ENCODE measurements at regions of chr13 and their contacts with region 1.

Region 1: GRCh38 chr13:99501184-99501847 is at the start of gene TM9SF2:
- DNase-seq: peak; percentile 94 to 98 (median 96)
- ATAC-seq: peak; percentile 70
- H3K4me3 ChIP-seq: peak within 1 kb of the TSS; percentile 93
- H3K4me3 Mint-ChIP-seq: peak within 1 kb of the TSS; percentile 94 to 100 (median 97)
- H3K27ac ChIP-seq: peak within 1 kb of the TSS; percentile 94
- H3K27ac Mint-ChIP-seq: peak within 1 kb of the TSS; percentile 96 to 99 (median 98)
- H3K4me1 ChIP-seq: peaks cover 47 to 65% of the 10 kb centered on the region in 2 donors
- H3K4me1 Mint-ChIP-seq: peaks cover 57 to 93% (median 85%) of the 10 kb centered on the region in 7 donors
- H3K27me3 ChIP-seq: no peaks in the 10 kb centered on the region
- H3K27me3 Mint-ChIP-seq: peaks cover 0 to 4% (median 0%) of the 10 kb centered on the region in 5 donors
- total RNA-seq, gene TM9SF2: 38.0 to 76.3 (median 53.1) TPM

Region 2: DNA sequence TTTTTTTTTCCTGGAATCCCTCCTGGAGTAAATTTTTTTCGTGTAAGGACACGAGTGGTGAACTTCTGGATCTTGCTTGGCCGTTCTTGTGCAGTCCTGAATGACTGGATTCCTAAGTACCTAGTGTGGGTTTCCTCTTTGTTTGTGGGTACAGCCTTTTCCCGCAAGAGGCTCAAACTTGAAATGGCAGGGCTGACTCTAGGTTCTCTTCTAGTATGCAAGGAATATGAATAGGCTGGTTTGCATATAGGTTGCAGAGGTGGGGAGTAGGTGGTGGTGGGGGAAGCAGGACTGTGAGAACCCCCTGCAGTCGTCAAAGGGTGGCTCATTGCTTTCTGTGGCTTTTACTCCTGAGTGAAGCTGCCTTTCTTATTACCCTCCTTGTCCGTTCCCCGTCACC is 287.1 kb before region 1 on chr13:
- CTCF ChIA-PET with region 1: interaction called, 3 read pairs
- POLR2A ChIA-PET with region 1: interaction called, 5 read pairs
- intact Hi-C with region 1: loop called (anchors 5 kb)
- DNase-seq: peak in 4 of 9 donors; percentile 34 to 53 (median 46)
- ATAC-seq: no peak
- H3K4me3 ChIP-seq: peak overlapping the region; percentile 53
- H3K4me3 Mint-ChIP-seq: peak overlapping the region; percentile 69 to 95 (median 92)
- H3K27ac ChIP-seq: peak overlapping the region; percentile 85
- H3K27ac Mint-ChIP-seq: peak overlapping the region; percentile 94 to 100 (median 99)
- H3K4me1 ChIP-seq: peaks cover 46 to 67% of the 10 kb centered on the region in 2 donors
- H3K4me1 Mint-ChIP-seq: peaks cover 49 to 93% (median 79%) of the 10 kb centered on the region in 7 donors
- H3K27me3 ChIP-seq: no peaks in the 10 kb centered on the region
- H3K27me3 Mint-ChIP-seq: no peaks in the 10 kb centered on the region

Region 3: DNA sequence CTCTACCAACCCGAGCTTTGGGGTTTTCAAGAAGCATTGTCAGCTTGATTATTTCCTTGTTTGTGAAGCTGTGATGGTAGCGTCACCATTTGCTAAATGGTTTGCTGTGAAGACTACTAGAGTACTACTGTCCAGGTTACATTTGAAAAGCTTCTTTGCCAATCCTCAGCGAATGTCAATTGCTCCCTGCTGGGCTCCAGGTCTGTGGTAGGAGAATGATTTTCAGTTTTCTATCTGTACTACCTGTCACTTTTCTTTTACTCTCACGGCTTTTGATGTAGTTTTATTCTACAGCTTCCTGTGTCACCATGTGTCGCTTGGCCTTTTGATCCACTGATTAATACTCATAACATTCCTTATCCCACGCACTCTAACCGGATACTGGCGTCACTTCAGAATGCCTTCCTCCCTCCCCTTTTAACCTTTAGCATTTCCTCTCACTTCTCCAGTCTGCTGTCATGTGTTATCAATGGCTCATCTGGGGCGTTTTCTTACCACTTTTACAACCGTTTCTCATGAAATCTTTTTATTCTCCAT is 186.6 kb before region 1 on chr13:
- CTCF ChIA-PET with region 1: no interaction called
- POLR2A ChIA-PET with region 1: no interaction called
- intact Hi-C with region 1: loop called (anchors 2 to 5 kb)
- DNase-seq: peak in 8 of 9 donors; percentile 57 to 89 (median 87)
- ATAC-seq: peak; percentile 80
- H3K4me3 ChIP-seq: peak overlapping the region; percentile 47
- H3K4me3 Mint-ChIP-seq: peak overlapping the region; percentile 46 to 91 (median 78)
- H3K27ac ChIP-seq: peak overlapping the region; percentile 90
- H3K27ac Mint-ChIP-seq: peak overlapping the region; percentile 87 to 99 (median 93)
- H3K4me1 ChIP-seq: peaks cover 56 to 72% of the 10 kb centered on the region in 2 donors
- H3K4me1 Mint-ChIP-seq: peaks cover 58 to 96% (median 78%) of the 10 kb centered on the region in 7 donors
- H3K27me3 ChIP-seq: no peaks in the 10 kb centered on the region
- H3K27me3 Mint-ChIP-seq: no peaks in the 10 kb centered on the region

Region 4: GRCh38 chr13:99436686-99437416 is 64.5 kb before region 1 on chr13:
- CTCF ChIA-PET with region 1: interaction called, 18 read pairs
- POLR2A ChIA-PET with region 1: interaction called, 4 read pairs
- intact Hi-C with region 1: loop called (anchors 1 kb)
- DNase-seq: peak; percentile 92 to 98 (median 93)
- ATAC-seq: peak; percentile 69
- H3K4me3 ChIP-seq: peak overlapping the region; percentile 39
- H3K4me3 Mint-ChIP-seq: peak overlapping the region; percentile 17 to 79 (median 68)
- H3K27ac ChIP-seq: peak overlapping the region; percentile 83
- H3K27ac Mint-ChIP-seq: peak overlapping the region; percentile 67 to 99 (median 87)
- H3K4me1 ChIP-seq: peaks cover 43 to 48% of the 10 kb centered on the region in 2 donors
- H3K4me1 Mint-ChIP-seq: peaks cover 28 to 68% (median 59%) of the 10 kb centered on the region in 7 donors
- H3K27me3 ChIP-seq: no peaks in the 10 kb centered on the region
- H3K27me3 Mint-ChIP-seq: peaks cover 0 to 30% (median 0%) of the 10 kb centered on the region in 5 donors

Region 5: GRCh38 chr13:99606324-99607066 is 105.2 kb after region 1 on chr13:
- CTCF ChIA-PET with region 1: no interaction called
- POLR2A ChIA-PET with region 1: interaction called, 17 read pairs
- intact Hi-C with region 1: loop called (anchors 1 kb)
- DNase-seq: peak; percentile 80 to 95 (median 87)
- ATAC-seq: peak; percentile 97
- H3K4me3 ChIP-seq: peak within 1 kb of the TSS; percentile 76
- H3K4me3 Mint-ChIP-seq: peak within 1 kb of the TSS; percentile 84 to 93 (median 92)
- H3K27ac ChIP-seq: peak within 1 kb of the TSS; percentile 83
- H3K27ac Mint-ChIP-seq: peak within 1 kb of the TSS; percentile 88 to 96 (median 93)
- H3K4me1 ChIP-seq: peaks cover 9 to 17% of the 10 kb centered on the region in 2 donors
- H3K4me1 Mint-ChIP-seq: peaks cover 28 to 69% (median 54%) of the 10 kb centered on the region in 7 donors
- H3K27me3 ChIP-seq: no peaks in the 10 kb centered on the region
- H3K27me3 Mint-ChIP-seq: peaks cover 0 to 11% (median 0%) of the 10 kb centered on the region in 5 donors